ENCODE measurements at regions of chr13 and their contacts with region 1.

Region 1: GRCh38 chr13:111474136-111475002 is 153.9 kb downstream of the TEX29 start:
- DNase-seq: no peak
- H3K4me3 ChIP-seq: no peak overlapping the region
- H3K27ac ChIP-seq: no peak overlapping the region
- H3K4me1 ChIP-seq: no peaks in the 10 kb centered on the region
- H3K27me3 ChIP-seq: no peaks in the 10 kb centered on the region
- CTCF ChIP-seq: peak; percentile 24 to 49 (median 30)
- POLR2A ChIP-seq: no peak

Region 2: GRCh38 chr13:111437856-111438547 is 36.4 kb before region 1 on chr13:
- intact Hi-C with region 1: no loop called
- DNase-seq: peak in 1 of 2 donors; percentile 93
- H3K4me3 ChIP-seq: no peak overlapping the region
- H3K27ac ChIP-seq: no peak overlapping the region
- H3K4me1 ChIP-seq: no peaks in the 10 kb centered on the region
- H3K27me3 ChIP-seq: no peaks in the 10 kb centered on the region
- CTCF ChIP-seq: no peak
- POLR2A ChIP-seq: no peak

Region 3: DNA sequence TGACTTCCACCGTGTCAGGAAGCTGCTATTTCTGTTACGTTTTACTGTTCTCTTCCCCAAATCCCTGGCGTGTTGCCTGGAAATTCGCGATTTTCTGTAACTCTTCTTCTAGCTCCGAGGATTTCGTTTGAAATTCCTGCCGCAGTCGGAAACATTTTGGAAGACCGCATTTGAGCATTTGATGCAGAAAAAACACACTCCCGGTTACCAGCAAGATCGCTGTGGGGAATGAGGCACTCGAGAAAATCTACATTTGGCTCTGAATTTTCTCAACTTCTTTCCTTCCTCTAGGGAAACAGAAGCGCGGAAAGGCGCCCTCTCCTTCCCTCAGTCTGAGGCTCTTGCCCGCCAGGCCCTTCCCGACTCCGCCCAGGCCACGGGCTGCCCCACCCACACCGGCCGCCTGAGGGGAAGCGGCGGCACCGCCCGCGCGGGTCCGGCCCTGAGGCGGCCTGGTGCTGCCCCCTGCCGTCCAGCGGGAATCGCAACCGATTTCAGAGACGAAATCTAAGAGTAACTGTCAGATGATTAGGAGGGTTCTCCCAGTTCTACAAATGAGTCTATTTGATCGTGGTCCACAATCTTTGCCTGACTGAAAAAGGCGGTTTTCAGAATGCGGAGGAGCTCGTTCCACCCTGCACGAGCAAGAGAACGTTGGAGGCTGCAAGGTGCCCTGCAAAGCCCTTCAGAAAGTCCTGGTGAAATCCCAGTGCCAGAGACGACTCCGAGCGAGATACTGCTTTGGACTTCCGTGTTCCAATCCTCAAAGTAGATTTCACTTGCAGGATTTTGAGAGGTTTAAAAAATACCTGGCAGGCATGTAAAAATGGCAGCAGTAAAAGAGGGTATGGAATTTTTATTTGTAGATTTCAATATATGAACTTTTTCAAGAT is 1132.0 kb after region 1 on chr13:
- intact Hi-C with region 1: loop called (anchors 10 kb)
- DNase-seq: no peak
- H3K4me3 ChIP-seq: peak overlapping the region; percentile 37 to 46
- H3K27ac ChIP-seq: peak overlapping the region; percentile 83
- H3K4me1 ChIP-seq: peaks cover 5% of the 10 kb centered on the region
- H3K27me3 ChIP-seq: no peaks in the 10 kb centered on the region
- CTCF ChIP-seq: peak; percentile 79 to 97 (median 89)
- POLR2A ChIP-seq: peak in 1 of 2 donors; percentile 8